WTC11 (cell line): ENCODE measurements at regions of chr15 and their contacts with region 1.

Region 1: DNA sequence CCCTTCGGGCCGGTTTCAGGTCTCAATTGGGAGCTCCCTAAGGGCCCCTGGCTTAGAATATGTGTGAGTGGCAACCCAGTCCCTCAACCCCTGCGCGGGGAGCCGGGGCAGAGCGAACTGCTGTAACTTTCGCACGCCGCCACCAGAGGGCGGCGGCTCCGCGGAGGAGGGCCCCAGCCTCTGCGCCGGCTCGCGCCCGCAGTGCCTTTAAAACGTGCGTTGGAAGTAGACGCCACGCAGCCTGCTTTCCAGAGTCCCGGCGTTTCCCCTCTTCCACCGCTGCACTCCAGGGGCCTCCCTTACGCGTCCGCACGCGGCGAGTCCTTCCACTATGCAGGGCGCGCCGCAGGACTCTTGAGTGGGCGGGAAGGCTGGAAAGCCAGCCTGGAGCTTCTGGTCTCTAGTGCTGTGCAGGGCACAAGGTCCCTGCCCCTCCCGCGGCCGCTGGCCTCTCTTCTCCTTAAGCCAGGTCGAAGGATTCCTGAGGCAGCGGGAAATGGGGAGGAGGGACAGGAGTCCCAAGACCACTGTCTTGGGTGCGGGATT is 23.7 kb upstream of the RNU6-1 start:
- DNase-seq: peak; percentile 85
- ATAC-seq: peak; percentile 95
- H3K4me3 Mint-ChIP-seq: peak overlapping the region; percentile 65
- H3K27ac Mint-ChIP-seq: no peak overlapping the region
- H3K4me1 Mint-ChIP-seq: peaks cover 18% of the 10 kb centered on the region
- H3K27me3 Mint-ChIP-seq: peaks cover 26% of the 10 kb centered on the region
- CTCF ChIP-seq: peak; percentile 91

Region 2: DNA sequence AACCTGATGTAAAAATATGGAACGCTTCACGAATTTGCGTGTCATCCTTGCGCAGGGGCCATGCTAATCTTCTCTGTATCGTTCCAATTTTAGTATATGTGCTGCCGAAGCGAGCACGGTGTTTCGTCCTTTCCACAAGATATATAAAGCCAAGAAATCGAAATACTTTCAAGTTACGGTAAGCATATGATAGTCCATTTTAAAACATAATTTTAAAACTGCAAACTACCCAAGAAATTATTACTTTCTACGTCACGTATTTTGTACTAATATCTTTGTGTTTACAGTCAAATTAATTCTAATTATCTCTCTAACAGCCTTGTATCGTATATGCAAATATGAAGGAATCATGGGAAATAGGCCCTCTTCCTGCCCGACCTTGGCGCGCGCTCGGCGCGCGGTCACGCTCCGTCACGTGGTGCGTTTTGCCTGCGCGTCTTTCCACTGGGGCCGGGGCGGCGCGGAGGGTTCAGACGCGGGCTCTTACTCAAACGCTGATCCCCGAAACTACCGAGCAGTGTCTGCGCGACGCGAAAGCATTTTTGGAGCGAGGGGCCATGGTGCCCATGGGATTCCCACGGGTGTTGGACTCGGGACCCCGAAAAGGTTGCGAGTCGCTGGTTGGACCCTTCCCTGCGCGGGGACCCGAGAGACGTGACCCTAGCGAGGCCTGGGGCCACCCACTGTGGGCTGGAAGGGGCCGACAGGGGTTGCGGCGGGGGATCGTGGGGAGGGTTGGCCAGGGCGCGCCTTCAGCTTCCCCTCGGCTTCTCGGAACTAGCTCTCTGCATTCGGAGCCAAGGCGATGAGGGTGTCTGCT is 23.4 kb before region 1 on chr15 and contains the start of gene RNU6-1:
- CTCF ChIA-PET with region 1: interaction called, 16 read pairs
- POLR2A ChIA-PET with region 1: no interaction called
- DNase-seq: peak; percentile 83
- ATAC-seq: peak; percentile 29
- H3K4me3 Mint-ChIP-seq: peak within 1 kb of the TSS; percentile 90
- H3K27ac Mint-ChIP-seq: peak within 1 kb of the TSS; percentile 97
- H3K4me1 Mint-ChIP-seq: peaks cover 61% of the 10 kb centered on the region
- H3K27me3 Mint-ChIP-seq: peaks cover 58% of the 10 kb centered on the region
- CTCF ChIP-seq: no peak
- total RNA-seq, gene RNU6-1: not detected in 3 replicates

Region 3: DNA sequence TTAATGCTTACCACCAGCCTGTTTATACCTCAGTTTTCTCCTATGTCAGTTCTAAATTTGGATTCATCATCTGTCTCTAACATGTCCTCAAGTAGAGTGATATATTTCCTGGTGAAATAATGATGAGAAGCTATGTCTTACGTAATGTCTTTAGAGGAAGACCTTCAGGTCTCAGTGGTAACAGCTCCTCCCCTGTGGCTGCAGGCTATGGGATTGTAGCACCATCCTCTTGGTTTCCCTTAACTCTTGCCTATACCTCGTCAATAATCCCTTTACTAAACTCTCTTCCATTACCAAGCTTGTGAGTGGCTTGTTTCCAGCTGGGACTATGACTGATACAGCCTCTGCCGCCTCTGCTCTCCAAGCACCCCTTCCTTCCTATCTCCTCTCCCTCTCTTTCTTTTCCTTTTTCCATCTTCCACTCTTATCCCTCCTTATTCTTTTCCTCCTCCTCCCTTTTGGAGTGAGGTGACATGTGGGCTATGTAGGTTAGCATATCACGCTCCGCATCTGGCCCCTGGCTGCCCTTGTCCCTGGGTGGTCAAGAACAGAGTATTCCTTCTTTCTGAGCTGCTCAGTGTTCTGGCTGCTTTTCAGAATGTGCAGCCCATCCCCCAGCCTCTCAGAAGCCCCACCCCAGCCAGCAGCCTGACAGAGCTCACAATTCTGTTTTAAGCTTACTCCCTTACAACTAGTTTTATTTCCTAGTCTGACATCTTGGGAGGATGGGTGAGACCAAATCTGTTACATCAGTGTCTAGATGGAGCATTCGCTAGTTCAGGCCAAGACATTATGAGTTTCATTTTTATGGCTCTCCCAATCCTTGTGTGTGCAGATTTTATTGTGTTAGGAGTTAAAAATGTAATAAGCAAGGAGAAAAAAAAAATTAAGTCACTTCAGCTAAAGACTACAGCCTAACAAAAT is 51.3 kb after region 1 on chr15:
- CTCF ChIA-PET with region 1: interaction called, 10 read pairs
- POLR2A ChIA-PET with region 1: no interaction called
- DNase-seq: peak; percentile 46
- ATAC-seq: peak; percentile 82
- H3K4me3 Mint-ChIP-seq: peak overlapping the region; percentile 18
- H3K27ac Mint-ChIP-seq: peak overlapping the region; percentile 55; the same call in 1 of the 2 replicates
- H3K4me1 Mint-ChIP-seq: peaks cover 43% of the 10 kb centered on the region
- H3K27me3 Mint-ChIP-seq: no peaks in the 10 kb centered on the region
- CTCF ChIP-seq: no peak

Region 4: GRCh38 chr15:68053701-68054627 is 190.4 kb after region 1 on chr15 and contains the start of gene PIAS1:
- CTCF ChIA-PET with region 1: interaction called, 13 read pairs
- POLR2A ChIA-PET with region 1: interaction called, 5 read pairs
- DNase-seq: peak; percentile 97
- ATAC-seq: peak; percentile 90
- H3K4me3 Mint-ChIP-seq: peak within 1 kb of the TSS; percentile 93
- H3K27ac Mint-ChIP-seq: peak within 1 kb of the TSS; percentile 71; the same call in 1 of the 2 replicates
- H3K4me1 Mint-ChIP-seq: peaks cover 49% of the 10 kb centered on the region
- H3K27me3 Mint-ChIP-seq: peaks cover 7% of the 10 kb centered on the region
- CTCF ChIP-seq: no peak
- total RNA-seq, gene PIAS1: 29.7 to 33.2 TPM (median 31.2 TPM) in 3 replicates

Region 5: DNA sequence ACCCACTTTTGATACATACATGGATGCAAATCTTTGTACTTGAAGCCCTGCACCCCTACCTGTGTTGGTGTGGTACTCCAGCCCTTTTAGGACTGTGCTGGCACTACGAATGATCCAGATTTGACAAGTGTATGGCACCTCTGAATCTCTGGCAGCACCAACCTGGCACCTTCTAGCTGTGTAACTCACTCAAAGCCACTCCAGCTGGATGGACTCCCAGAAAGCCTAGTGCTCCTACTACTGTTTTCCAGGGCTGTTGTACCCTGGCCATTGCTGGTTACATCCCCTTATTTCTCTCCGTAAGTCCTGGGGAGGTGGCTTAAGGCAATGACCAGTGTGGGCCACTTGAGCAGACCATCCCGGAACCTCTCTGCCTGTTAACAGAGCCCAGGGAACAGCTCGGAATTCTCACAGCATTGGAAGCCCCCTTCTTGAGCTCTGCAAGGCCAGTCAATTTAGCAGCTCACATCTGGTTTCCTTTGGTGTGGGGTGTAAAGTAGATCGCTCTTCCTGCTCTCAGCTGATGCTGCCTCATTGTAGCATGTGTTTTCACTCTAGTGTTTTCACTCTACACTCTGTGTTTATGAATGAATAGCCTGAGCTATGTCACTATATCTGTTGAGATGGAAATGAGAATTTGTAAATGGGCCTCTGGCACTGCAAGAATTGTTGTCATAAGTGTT is 329.4 kb after region 1 on chr15:
- CTCF ChIA-PET with region 1: interaction called, 17 read pairs
- POLR2A ChIA-PET with region 1: no interaction called
- DNase-seq: no peak
- ATAC-seq: no peak
- H3K4me3 Mint-ChIP-seq: no peak overlapping the region
- H3K27ac Mint-ChIP-seq: peak overlapping the region; percentile 84
- H3K4me1 Mint-ChIP-seq: peaks cover 17% of the 10 kb centered on the region
- H3K27me3 Mint-ChIP-seq: no peaks in the 10 kb centered on the region
- CTCF ChIP-seq: no peak